Cardiac septum (tissue), 1 donor: ENCODE measurements at regions of chr2 and their contacts with region 1.

Region 1: GRCh38 chr2:231715258-231715997 is 7.1 kb downstream of the PTMA start:
- DNase-seq: peak; percentile 81

Region 2: DNA sequence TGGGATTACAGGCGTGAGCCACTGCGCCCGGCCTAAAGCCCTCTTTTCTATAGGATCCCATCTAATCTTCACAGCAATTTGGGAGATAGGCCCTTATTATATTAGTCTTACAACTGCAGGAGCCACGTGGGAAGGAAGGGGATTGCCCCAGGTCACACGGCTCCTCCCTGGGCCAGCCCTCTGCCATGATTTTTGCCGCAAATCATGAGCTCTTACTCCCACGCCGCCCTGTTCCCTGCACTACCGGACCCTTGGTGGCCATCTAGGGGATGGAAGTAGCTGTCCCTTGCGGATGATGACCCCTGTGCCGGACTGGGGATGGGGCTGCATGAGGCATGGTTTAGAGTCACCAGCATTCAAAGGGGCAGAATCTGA is 35.5 kb before region 1 on chr2:
- intact Hi-C with region 1: loop called (anchors 1 kb)
- DNase-seq: no peak